ENCODE measurements at regions of chr11 and their contacts with region 1.

Region 1: DNA sequence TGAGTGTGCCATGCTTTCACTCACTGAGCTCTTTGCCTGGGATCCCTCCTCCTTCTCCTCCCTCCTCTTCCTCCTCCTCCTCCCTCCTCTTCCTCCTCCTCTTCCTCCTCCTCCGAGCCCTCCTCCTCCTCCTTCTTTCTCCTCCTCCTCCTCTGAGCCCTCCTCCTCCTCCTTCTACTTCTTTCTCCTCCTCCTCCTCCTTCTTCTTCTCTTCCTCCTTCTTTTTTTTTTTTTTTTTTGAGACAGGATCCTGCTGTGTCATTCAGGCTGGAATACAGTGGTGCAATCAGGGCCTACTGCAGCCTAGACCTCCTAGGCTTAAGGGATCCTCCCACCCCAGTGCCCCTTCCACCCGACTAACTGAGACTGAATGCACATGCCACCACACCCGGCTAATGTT is 62.3 kb downstream of the DEUP1 start:
- DNase-seq: no peak
- H3K4me3 ChIP-seq: no peak overlapping the region
- H3K27ac ChIP-seq: no peak overlapping the region
- H3K4me1 ChIP-seq: no peaks in the 10 kb centered on the region
- H3K27me3 ChIP-seq: no peaks in the 10 kb centered on the region
- CTCF ChIP-seq: no peak
- EP300 ChIP-seq: no peak
- POLR2A ChIP-seq: no peak

Region 2: GRCh38 chr11:93188726-93189125 is 204.1 kb before region 1 on chr11:
- intact Hi-C with region 1: no loop called
- DNase-seq: no peak
- H3K4me3 ChIP-seq: no peak overlapping the region
- H3K27ac ChIP-seq: no peak overlapping the region
- H3K4me1 ChIP-seq: no peaks in the 10 kb centered on the region
- H3K27me3 ChIP-seq: no peaks in the 10 kb centered on the region
- CTCF ChIP-seq: no peak
- EP300 ChIP-seq: no peak
- POLR2A ChIP-seq: no peak

Region 3: DNA sequence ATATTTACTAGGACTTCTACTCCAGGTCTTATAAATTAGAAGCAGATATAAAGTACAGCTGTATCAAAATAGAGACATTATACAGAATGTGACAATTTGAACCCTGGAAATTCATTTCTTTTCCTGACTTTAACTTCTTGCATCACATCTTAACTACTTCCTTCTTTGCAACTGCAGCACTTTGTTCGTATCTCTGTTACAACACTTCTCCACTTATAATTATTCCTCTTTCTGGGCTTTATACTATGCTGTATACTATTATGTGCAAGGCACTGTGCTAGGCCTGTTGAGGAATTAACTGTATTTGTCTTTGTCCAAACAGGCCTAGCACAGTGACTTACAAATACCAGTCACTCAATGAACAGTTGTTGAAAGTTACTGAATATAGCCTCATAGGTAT is 193.3 kb before region 1 on chr11:
- intact Hi-C with region 1: no loop called
- DNase-seq: no peak
- H3K4me3 ChIP-seq: no peak overlapping the region
- H3K27ac ChIP-seq: no peak overlapping the region
- H3K4me1 ChIP-seq: no peaks in the 10 kb centered on the region
- H3K27me3 ChIP-seq: no peaks in the 10 kb centered on the region
- CTCF ChIP-seq: no peak
- EP300 ChIP-seq: no peak
- POLR2A ChIP-seq: no peak

Region 4: DNA sequence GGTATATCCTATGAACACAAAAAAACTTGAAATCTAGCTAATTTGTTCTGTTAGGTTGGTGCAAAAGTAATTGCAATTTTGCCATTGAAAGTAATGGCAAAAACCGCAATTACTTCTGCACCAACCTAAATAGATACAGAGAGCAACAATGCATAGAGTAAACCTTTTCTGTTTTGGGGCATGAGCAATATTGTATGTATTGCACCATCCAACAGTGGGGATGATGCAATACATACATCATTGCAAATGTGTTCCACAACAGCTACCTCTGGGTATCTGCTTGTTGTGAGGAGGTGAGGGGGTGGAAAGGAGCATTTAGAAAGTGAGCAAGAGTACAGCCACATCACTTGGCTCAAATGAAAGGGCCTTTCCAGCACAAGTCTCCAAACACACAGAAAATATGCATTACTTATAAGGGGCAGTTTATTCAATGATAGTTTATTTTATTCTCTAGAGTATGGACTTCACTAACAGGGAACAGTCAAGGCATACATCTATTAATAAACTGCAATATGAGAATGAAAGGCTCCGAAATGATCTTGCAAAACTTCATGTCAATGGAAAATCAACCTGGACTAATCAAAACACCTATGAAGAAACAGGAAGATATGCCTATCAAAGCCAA is 15.0 kb after region 1 on chr11:
- intact Hi-C with region 1: loop called in 1 of 4 experiments (anchors 2 kb)
- DNase-seq: no peak
- H3K4me3 ChIP-seq: no peak overlapping the region
- H3K27ac ChIP-seq: no peak overlapping the region
- H3K4me1 ChIP-seq: no peaks in the 10 kb centered on the region
- H3K27me3 ChIP-seq: no peaks in the 10 kb centered on the region
- CTCF ChIP-seq: no peak
- EP300 ChIP-seq: no peak
- POLR2A ChIP-seq: no peak